ENCODE measurements at regions of chr22 and their contacts with region 1.

Region 1: DNA sequence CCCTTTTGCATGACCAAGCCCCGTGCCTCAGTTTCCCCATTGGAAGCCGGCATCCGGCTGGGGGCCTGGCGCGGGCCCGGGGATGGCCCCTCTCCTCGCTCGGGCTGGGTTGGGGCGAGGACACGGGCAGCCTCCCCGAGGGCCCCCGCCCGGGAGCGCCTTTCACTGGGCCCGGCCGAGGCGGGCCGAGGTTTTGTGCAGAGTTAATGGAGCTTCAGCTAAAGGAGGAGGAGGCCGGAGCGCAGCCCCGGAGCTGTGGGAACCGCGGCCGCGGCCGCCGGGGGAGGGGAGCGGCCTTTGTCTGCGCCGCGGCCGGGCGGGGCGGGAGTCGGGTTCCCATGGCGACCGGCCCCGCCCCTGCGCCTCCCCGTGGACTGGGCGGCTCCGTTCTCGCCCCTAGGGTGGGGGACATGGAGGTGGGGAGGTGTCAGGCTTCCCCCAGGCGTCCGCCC is 1.4 kb upstream of the MAPK11 start:
- DNase-seq: peak in 1 of 2 experiments; percentile 73
- H3K4me3 ChIP-seq: peak overlapping the region; percentile 82
- H3K27ac ChIP-seq: no peak overlapping the region
- H3K4me1 ChIP-seq: peaks cover 47% of the 10 kb centered on the region
- H3K27me3 ChIP-seq: no peaks in the 10 kb centered on the region
- CTCF ChIP-seq: 0 out of 2 replicates have a peak, but pooled peaks have one; percentile 30

Region 2: GRCh38 chr22:50002791-50003190 is 268.8 kb before region 1 on chr22:
- CTCF ChIA-PET with region 1: interaction called, 10 read pairs
- POLR2A ChIA-PET with region 1: no interaction called
- intact Hi-C with region 1: no loop called
- DNase-seq: no peak
- H3K4me3 ChIP-seq: no peak overlapping the region
- H3K27ac ChIP-seq: no peak overlapping the region
- H3K4me1 ChIP-seq: peaks cover 5% of the 10 kb centered on the region; the same call in 1 of the 2 replicates
- H3K27me3 ChIP-seq: no peaks in the 10 kb centered on the region
- CTCF ChIP-seq: no peak

Region 3: DNA sequence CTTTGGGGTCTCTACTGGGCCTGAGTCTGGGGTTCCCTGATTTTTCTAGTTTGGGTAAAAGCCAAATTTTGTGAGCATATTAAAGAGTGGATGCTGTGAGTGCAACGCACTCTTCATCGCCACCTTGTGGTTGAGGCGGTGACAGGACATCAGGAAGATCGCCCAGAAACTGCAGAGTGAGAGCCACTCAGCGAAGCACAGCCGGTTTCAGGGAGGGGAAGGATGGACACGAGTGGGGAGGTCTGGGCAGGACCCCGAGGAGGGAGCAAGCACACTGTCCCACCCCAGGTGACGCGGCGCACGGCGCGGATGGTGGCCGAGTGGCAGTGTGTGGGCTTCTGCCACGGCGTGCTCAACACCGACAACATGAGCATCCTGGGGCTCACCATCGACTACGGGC is 61.7 kb before region 1 on chr22:
- CTCF ChIA-PET with region 1: no interaction called
- POLR2A ChIA-PET with region 1: no interaction called
- intact Hi-C with region 1: no loop called
- DNase-seq: peak; percentile 48 to 53
- H3K4me3 ChIP-seq: no peak overlapping the region
- H3K27ac ChIP-seq: no peak overlapping the region
- H3K4me1 ChIP-seq: no peaks in the 10 kb centered on the region
- H3K27me3 ChIP-seq: no peaks in the 10 kb centered on the region
- CTCF ChIP-seq: peak; percentile 98